Activated B cell treated with CpG ODN at 0.5 μM for 24 hours (primary cell): ENCODE measurements at regions of chr17 and their contacts with region 1.

Region 1: GRCh38 chr17:8894673-8895578 is 27.5 kb upstream of the PIK3R6 start:
- DNase-seq: no peak
- ATAC-seq: peak; percentile 55
- H3K4me3 Mint-ChIP-seq: no peak overlapping the region
- H3K27ac Mint-ChIP-seq: peak overlapping the region; percentile 0
- H3K4me1 Mint-ChIP-seq: peaks cover 51% of the 10 kb centered on the region
- H3K27me3 Mint-ChIP-seq: no peaks in the 10 kb centered on the region
- CTCF ChIP-seq: no peak

Region 2: GRCh38 chr17:8409966-8410864 is 484.7 kb before region 1 on chr17:
- CTCF ChIA-PET with region 1: interaction called, 7 read pairs
- POLR2A ChIA-PET with region 1: no interaction called
- intact Hi-C with region 1: loop called (anchors 1 kb)
- DNase-seq: peak; percentile 66
- ATAC-seq: peak; percentile 81
- H3K4me3 Mint-ChIP-seq: no peak overlapping the region
- H3K27ac Mint-ChIP-seq: no peak overlapping the region
- H3K4me1 Mint-ChIP-seq: peaks cover 4% of the 10 kb centered on the region
- H3K27me3 Mint-ChIP-seq: peaks cover 13% of the 10 kb centered on the region
- CTCF ChIP-seq: peak; percentile 87

Region 3: GRCh38 chr17:8785547-8786413 is 109.1 kb before region 1 on chr17:
- CTCF ChIA-PET with region 1: interaction called, 14 read pairs
- POLR2A ChIA-PET with region 1: no interaction called
- intact Hi-C with region 1: no loop called
- DNase-seq: peak; percentile 59
- ATAC-seq: peak; percentile 56
- H3K4me3 Mint-ChIP-seq: no peak overlapping the region
- H3K27ac Mint-ChIP-seq: no peak overlapping the region
- H3K4me1 Mint-ChIP-seq: peaks cover 2% of the 10 kb centered on the region
- H3K27me3 Mint-ChIP-seq: peaks cover 9% of the 10 kb centered on the region
- CTCF ChIP-seq: peak; percentile 36

Region 4: GRCh38 chr17:8806926-8807550 is 87.9 kb before region 1 on chr17:
- CTCF ChIA-PET with region 1: interaction called, 12 read pairs
- POLR2A ChIA-PET with region 1: interaction called, 4 read pairs
- intact Hi-C with region 1: loop called (anchors 1 kb)
- DNase-seq: peak; percentile 34
- ATAC-seq: peak; percentile 90
- H3K4me3 Mint-ChIP-seq: peak overlapping the region; percentile 56
- H3K27ac Mint-ChIP-seq: peak overlapping the region; percentile 92
- H3K4me1 Mint-ChIP-seq: peaks cover 42% of the 10 kb centered on the region
- H3K27me3 Mint-ChIP-seq: no peaks in the 10 kb centered on the region
- CTCF ChIP-seq: no peak

Region 5: GRCh38 chr17:8909586-8910270 is 14.8 kb after region 1 on chr17:
- CTCF ChIA-PET with region 1: interaction called, 23 read pairs
- POLR2A ChIA-PET with region 1: interaction called, 47 read pairs
- intact Hi-C with region 1: no loop called
- DNase-seq: no peak
- ATAC-seq: no peak
- H3K4me3 Mint-ChIP-seq: peak overlapping the region; percentile 13
- H3K27ac Mint-ChIP-seq: peak overlapping the region; percentile 31
- H3K4me1 Mint-ChIP-seq: peaks cover 46% of the 10 kb centered on the region
- H3K27me3 Mint-ChIP-seq: no peaks in the 10 kb centered on the region
- CTCF ChIP-seq: no peak